ENCODE measurements at regions of chr10 and their contacts with region 1.

Region 1: DNA sequence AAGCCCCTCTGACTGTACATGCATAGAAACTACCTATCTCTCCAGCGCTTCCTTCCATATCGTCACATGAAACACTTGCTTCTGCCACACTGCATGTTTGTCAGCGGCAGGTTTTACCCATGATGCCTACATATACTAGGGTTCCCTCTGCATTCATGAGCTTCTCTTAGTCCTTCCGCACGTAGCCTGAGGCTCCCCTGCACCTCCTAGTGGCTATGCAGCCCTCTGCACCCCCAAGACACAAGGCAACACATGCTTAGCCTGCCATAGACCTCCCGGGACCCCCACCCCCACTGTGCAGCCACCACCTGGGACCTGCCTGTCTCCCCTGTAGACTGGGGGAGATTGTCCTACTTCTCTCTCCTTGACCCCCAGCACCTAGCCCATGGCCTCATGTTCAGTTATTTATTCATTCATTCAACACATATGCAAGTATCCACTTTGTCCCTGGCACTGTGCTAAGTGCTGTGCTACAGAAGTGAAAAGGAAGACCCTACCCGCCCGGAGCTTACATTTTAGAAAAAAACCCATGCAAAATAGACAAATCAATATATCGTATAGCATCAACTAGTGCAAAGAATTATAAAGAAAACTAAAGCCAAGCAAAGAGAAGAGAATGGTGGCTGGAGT is 23.5 kb downstream of the TMEM273 start:
- DNase-seq: peak in 1 of 2 donors; percentile 32
- H3K4me3 ChIP-seq: no peak overlapping the region
- H3K27ac ChIP-seq: no peak overlapping the region
- H3K4me1 ChIP-seq: no peaks in the 10 kb centered on the region
- H3K27me3 ChIP-seq: no peaks in the 10 kb centered on the region
- CTCF ChIP-seq: peak; percentile 22 to 54 (median 39)
- POLR2A ChIP-seq: no peak

Region 2: DNA sequence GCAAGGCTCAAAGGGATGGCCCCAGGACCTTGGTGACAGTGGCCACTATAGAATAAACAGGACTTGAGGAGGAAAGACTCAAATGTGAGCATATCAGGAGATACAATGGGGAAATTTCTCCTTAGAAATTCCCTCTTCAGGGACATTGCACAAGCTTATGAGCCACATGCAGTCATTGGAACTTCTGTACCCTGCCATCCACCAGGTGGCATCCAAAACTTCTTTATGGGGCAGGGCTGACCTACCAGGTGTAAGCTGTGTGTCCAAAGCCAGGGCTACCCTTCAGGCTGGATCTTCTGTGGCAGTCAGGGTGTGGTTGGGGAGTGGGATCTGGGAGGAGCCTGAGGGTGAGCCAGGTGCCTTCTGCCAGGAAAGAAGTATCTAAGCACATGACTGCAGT is 188.5 kb before region 1 on chr10:
- intact Hi-C with region 1: loop called (anchors 5 kb)
- DNase-seq: no peak
- H3K4me3 ChIP-seq: no peak overlapping the region
- H3K27ac ChIP-seq: no peak overlapping the region
- H3K4me1 ChIP-seq: no peaks in the 10 kb centered on the region
- H3K27me3 ChIP-seq: no peaks in the 10 kb centered on the region
- CTCF ChIP-seq: peak in 2 of 4 experiments; percentile 9 to 20
- POLR2A ChIP-seq: no peak

Region 3: GRCh38 chr10:49109669-49110340 is 54.9 kb before region 1 on chr10:
- intact Hi-C with region 1: no loop called
- DNase-seq: peak; percentile 62 to 68
- H3K4me3 ChIP-seq: no peak overlapping the region
- H3K27ac ChIP-seq: peak overlapping the region in 1 of 2 donors; percentile 5
- H3K4me1 ChIP-seq: peaks cover 0 to 19% of the 10 kb centered on the region in 2 donors
- H3K27me3 ChIP-seq: no peaks in the 10 kb centered on the region
- CTCF ChIP-seq: no peak
- POLR2A ChIP-seq: no peak

Measured in uterus (tissue), 4 donors.